ENCODE measurements at regions of chr3 and their contacts with region 1.

Region 1: GRCh38 chr3:22117751-22118346 is 366.8 kb upstream of the ZNF385D start:
- DNase-seq: peak; percentile 4
- ATAC-seq: no peak
- H3K4me3 ChIP-seq: no peak overlapping the region
- H3K27ac ChIP-seq: no peak overlapping the region
- H3K4me1 ChIP-seq: no peaks in the 10 kb centered on the region
- H3K27me3 ChIP-seq: no peaks in the 10 kb centered on the region
- CTCF ChIP-seq: peak; percentile 15; the same call in 1 of the 2 replicates

Region 2: GRCh38 chr3:20225769-20226168 is 1892.1 kb before region 1 on chr3:
- CTCF ChIA-PET with region 1: no interaction called
- POLR2A ChIA-PET with region 1: no interaction called
- in situ Hi-C with region 1: no loop called
- intact Hi-C with region 1: loop called (anchors 5 kb)
- DNase-seq: peak; percentile 1
- ATAC-seq: no peak; the same call in 1 of the 2 replicates
- H3K4me3 ChIP-seq: no peak overlapping the region
- H3K27ac ChIP-seq: no peak overlapping the region
- H3K4me1 ChIP-seq: no peaks in the 10 kb centered on the region
- H3K27me3 ChIP-seq: no peaks in the 10 kb centered on the region
- CTCF ChIP-seq: peak; percentile 50; the same call in 1 of the 2 replicates

Region 3: DNA sequence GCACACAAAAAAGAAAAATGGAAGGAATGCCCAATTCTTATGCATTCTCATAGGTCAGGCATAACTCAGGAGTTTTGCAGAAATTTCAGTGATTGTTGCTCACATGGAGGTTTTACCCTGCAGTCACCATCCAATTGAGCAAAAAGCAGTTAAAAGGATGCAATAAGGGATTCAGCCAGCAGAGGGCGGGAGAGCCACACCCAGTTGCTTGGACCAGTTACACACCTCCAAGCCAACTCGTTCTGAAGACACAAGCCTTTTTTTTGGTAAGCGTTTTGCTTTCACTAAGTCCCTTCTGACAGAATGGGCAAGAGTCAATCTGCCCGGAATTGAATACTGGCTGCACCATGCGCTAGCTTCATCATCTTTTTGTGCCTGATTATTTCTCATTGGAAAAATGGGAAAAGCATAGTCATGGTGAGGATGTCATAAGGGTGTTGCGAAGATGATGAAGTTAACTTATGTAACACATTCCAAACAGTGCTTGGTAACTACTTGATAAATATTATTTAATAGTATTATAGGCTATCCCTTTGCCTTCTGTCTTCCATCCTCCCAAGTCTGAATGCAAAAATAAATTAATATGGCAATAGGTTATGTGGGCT is 1777.4 kb before region 1 on chr3:
- CTCF ChIA-PET with region 1: no interaction called
- POLR2A ChIA-PET with region 1: no interaction called
- in situ Hi-C with region 1: no loop called
- intact Hi-C with region 1: loop called (anchors 10 kb)
- DNase-seq: peak; percentile 71
- ATAC-seq: peak; percentile 78; the same call in 1 of the 2 replicates
- H3K4me3 ChIP-seq: no peak overlapping the region
- H3K27ac ChIP-seq: no peak overlapping the region
- H3K4me1 ChIP-seq: no peaks in the 10 kb centered on the region
- H3K27me3 ChIP-seq: no peaks in the 10 kb centered on the region
- CTCF ChIP-seq: peak; percentile 88

Region 4: DNA sequence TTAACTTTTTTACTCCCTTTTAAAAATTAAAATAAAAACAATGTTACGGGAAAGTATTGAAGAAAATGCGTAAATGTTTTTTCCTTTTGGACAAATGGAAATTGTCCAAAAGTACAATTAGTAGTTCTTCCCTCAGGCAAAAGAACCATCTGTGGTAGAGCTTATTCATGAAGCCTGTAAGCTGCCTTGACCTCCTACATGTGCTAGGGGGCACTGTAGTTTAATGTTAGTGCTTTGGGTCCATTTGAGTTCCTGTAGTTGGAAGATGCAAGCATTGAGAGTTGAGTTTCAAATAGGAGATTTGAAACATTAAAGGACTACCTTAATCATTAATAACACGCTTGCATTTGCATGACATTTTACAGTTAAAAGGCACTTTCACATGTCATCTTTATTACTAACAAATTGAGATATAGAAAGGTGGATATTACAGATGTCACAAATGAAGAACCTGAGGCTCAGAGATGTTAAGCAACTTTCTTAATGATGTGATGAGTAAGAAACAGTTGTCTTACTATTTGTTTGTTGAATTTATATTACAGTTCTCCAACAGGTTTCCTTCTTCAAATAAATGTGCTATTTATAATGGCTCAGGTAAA is 365.0 kb before region 1 on chr3:
- CTCF ChIA-PET with region 1: no interaction called
- POLR2A ChIA-PET with region 1: no interaction called
- in situ Hi-C with region 1: no loop called
- intact Hi-C with region 1: loop called (anchors 10 kb)
- DNase-seq: no peak
- ATAC-seq: no peak
- H3K4me3 ChIP-seq: no peak overlapping the region
- H3K27ac ChIP-seq: no peak overlapping the region
- H3K4me1 ChIP-seq: no peaks in the 10 kb centered on the region
- H3K27me3 ChIP-seq: no peaks in the 10 kb centered on the region
- CTCF ChIP-seq: peak; percentile 38; the same call in 1 of the 2 replicates

Region 5: GRCh38 chr3:21894459-21895340 is 223.1 kb before region 1 on chr3:
- CTCF ChIA-PET with region 1: no interaction called
- POLR2A ChIA-PET with region 1: no interaction called
- in situ Hi-C with region 1: no loop called
- intact Hi-C with region 1: loop called (anchors 10 kb)
- DNase-seq: no peak
- ATAC-seq: no peak
- H3K4me3 ChIP-seq: no peak overlapping the region
- H3K27ac ChIP-seq: no peak overlapping the region
- H3K4me1 ChIP-seq: no peaks in the 10 kb centered on the region
- H3K27me3 ChIP-seq: no peaks in the 10 kb centered on the region
- CTCF ChIP-seq: peak; percentile 51; the same call in 1 of the 2 replicates

Region 6: DNA sequence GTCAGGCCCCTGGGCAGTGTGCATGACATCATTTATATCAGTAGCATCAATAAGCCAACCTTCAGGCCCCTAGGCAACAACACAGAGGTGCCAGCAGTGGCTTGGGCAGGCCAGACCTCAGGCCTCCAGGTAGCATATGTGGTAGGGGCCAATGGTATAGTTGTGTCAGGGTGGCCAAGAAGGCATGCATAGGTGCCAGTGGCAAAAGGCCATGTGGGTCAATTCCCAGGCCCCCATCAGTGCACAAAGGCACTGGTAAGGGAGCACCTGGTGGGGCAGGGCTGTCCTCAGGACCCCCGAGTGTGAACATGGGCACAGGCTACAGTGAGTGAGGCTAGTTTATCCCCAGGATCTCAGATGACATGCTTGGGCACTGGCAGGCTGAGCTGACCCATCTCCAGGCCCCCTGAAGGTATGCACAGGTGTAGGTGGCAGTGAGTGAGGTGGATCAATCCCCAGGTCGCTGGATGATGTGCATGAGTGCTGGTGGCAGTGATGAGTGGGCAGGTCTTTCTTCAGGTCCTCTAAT is 122.7 kb before region 1 on chr3:
- CTCF ChIA-PET with region 1: no interaction called
- POLR2A ChIA-PET with region 1: no interaction called
- in situ Hi-C with region 1: no loop called
- intact Hi-C with region 1: no loop called
- DNase-seq: no peak
- ATAC-seq: no peak
- H3K4me3 ChIP-seq: no peak overlapping the region
- H3K27ac ChIP-seq: no peak overlapping the region
- H3K4me1 ChIP-seq: no peaks in the 10 kb centered on the region
- H3K27me3 ChIP-seq: no peaks in the 10 kb centered on the region
- CTCF ChIP-seq: no peak

Measured in Panc1 (cell line).